ENCODE measurements at regions of chr6 and their contacts with region 1.

Region 1: DNA sequence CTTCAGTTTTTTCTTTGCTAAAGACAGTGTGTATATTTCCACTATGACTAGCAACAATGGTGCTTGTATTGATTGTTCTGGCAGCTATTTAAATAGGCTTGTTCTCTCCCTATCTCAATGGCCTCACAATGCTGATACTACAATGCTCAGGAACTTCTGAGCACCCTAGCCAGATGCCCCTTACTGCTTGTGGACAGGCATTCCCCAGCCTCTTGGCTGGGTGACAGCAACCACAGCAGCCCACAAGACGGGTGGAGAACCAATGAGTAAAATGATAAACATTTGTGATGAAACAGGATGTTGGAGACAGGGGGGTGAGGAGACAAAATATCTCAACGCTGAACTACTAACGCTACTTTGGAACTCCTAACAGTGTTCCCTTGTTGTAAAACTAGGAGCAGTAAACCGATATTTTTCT is 42.3 kb downstream of the HIVEP2 start:
- DNase-seq: peak; percentile 73
- ATAC-seq: peak; percentile 89

Region 2: GRCh38 chr6:142246960-142247359 is 655.7 kb before region 1 on chr6:
- intact Hi-C with region 1: no loop called
- DNase-seq: no peak
- ATAC-seq: no peak

Region 3: DNA sequence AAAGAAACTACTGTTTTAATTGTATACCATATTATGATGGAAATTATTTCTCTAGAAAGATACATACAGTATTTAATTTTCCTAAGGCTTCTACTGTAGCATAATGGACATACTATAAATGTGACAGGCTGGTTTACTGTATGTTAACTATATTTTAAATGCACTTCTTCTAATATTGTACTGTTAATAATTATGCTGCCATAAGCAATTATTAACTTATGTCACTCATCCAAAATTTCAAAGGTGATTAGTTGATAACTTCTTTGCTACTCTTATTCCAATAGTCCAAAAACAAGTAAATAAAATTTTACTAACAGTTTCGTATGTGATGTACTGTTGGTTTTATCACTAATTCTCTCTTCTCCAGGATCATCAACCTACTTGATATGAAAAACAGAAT is 14.2 kb after region 1 on chr6:
- intact Hi-C with region 1: loop called (anchors 1 kb)
- DNase-seq: no peak
- ATAC-seq: no peak

Region 4: GRCh38 chr6:143141442-143141841 is 238.8 kb after region 1 on chr6:
- intact Hi-C with region 1: no loop called
- DNase-seq: no peak
- ATAC-seq: no peak

Region 5: GRCh38 chr6:143158113-143158581 is 255.5 kb after region 1 on chr6:
- intact Hi-C with region 1: no loop called
- DNase-seq: no peak
- ATAC-seq: peak; percentile 36

Measured in sciatic nerve (tissue), 2 donors.